Heart left ventricle (tissue), 16 donors: ENCODE measurements at regions of chr16 and their contacts with region 1.

Region 1: DNA sequence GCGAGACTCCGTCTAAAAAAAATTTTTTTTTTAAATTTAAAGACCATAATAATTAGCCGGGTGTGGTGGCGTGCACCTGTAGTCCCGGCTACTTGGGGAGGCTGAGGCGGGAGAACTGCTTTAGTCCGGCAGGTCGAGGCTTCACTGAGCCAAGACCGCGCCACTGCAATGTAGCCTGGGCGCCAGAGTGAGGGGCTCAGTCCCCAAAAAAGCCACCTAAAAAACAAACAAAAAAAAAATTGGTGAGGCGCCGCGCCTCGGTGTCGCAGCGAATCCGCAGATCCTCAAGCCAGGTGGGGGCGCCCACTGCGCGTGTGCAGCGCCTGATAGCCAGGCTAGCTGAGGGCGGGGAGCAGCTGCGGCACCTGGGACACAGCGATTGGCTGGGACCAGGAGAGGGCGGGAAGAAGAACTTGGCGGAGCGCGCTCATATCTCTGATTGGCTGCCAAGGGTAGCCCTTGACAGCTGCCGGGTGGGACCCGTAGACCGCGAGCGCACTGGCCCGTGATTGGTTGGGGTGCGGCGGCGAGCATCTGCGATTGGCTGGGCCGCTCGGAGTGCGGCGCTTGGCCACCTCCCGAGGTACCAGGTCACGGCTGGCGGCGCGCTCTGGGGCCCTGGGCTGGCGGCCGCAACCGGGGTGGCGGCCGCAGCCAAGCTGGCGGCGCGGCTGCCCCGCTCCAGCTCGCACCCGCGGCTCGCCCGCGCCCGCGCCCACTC is 9.0 kb upstream of the CLDN9 start:
- DNase-seq: peak; percentile 95 to 99 (median 97)
- ATAC-seq: peak; percentile 99
- H3K4me3 ChIP-seq: peak overlapping the region in 10 of 12 donors; percentile 15 to 53 (median 28)
- H3K27ac ChIP-seq: peak overlapping the region in 1 of 12 donors; percentile 67
- H3K4me1 ChIP-seq: peaks cover 0 to 28% (median 4%) of the 10 kb centered on the region in 12 donors
- H3K27me3 ChIP-seq: peaks cover 0 to 51% (median 21%) of the 10 kb centered on the region in 9 donors
- CTCF ChIP-seq: peak; percentile 7 to 69 (median 55)
- POLR2A ChIP-seq: peak in 1 of 2 donors; percentile 40

Region 2: GRCh38 chr16:3020169-3020736 is 16.5 kb after region 1 on chr16 and contains the start of gene TNFRSF12A:
- intact Hi-C with region 1: loop called in 1 of 10 experiments (anchors 1 kb)
- DNase-seq: peak; percentile 82 to 90 (median 84)
- ATAC-seq: peak in 3 of 4 donors; percentile 3 to 45 (median 42)
- H3K4me3 ChIP-seq: peak within 1 kb of the TSS; percentile 35 to 99 (median 76)
- H3K27ac ChIP-seq: peak within 1 kb of the TSS; percentile 31 to 100 (median 96)
- H3K4me1 ChIP-seq: peaks cover 13 to 61% (median 44%) of the 10 kb centered on the region in 12 donors
- H3K27me3 ChIP-seq: peaks cover 6 to 21% (median 14%) of the 10 kb centered on the region in 9 donors
- CTCF ChIP-seq: peak in 4 of 12 donors; percentile 3 to 24 (median 16)
- POLR2A ChIP-seq: peak; percentile 45 to 89
- total RNA-seq, gene TNFRSF12A: 27.8 to 289 (median 92.4) TPM

Region 3: DNA sequence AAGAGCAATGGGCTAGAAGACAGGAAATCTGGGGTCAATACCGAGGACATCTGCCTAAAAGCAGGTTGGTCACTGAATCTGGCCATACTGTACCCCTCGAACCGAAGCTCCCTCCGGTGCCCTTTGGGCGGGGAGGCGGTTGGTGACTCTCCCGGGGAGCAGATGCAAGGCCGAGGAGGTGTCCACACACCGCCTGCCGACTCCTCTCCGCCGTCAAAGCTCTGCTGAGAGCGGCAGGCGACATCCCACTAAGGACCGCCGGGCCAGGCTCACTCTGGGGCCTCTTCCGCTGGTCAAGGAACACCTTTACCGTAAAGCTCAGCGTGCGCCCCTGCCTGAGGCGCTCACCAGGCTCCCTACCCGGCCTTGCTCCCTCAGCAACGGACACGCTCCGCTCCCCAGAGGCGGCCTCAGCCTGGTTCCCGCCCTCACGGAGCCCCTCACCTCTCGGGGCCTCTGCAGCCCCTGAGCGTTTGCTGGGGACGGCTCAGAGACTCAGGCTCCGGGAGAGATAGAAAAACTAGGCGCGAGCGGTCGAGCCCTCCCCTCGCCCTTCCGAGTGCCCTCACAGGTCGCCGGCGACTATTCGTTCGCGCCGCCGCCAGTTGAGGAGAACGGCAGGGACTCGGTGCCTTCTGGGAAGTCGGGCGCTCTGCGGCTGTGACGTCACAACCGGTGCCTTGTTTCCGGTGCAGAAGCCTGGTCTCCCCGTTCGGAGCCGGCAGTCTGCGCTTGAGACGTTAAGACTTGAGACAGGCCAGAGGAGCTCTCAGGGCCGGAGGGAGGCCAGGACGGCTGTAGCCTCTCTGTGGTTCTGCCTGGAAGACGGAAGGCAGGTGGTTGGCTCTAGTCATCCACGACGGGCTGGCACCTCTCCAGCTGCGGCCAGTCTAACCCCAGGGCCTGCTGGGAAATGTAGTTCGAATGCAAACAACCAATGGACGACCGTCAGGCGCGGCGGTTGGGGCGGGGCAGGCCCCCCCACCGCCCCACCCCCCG is 231.1 kb after region 1 on chr16 and contains the start of gene ZNF200:
- intact Hi-C with region 1: no loop called
- DNase-seq: peak; percentile 97 to 99 (median 98)
- ATAC-seq: peak; percentile 99
- H3K4me3 ChIP-seq: peak within 1 kb of the TSS; percentile 79 to 99 (median 90)
- H3K27ac ChIP-seq: peak within 1 kb of the TSS; percentile 88 to 100 (median 98)
- H3K4me1 ChIP-seq: peaks cover 0 to 18% (median 13%) of the 10 kb centered on the region in 12 donors
- H3K27me3 ChIP-seq: no peaks in the 10 kb centered on the region
- CTCF ChIP-seq: no peak
- POLR2A ChIP-seq: peak in 1 of 2 donors; percentile 75
- total RNA-seq, gene ZNF200: 4.8 to 8.7 (median 6.5) TPM